B cell (primary cell): ENCODE measurements at regions of chr5 and their contacts with region 1.

Region 1: DNA sequence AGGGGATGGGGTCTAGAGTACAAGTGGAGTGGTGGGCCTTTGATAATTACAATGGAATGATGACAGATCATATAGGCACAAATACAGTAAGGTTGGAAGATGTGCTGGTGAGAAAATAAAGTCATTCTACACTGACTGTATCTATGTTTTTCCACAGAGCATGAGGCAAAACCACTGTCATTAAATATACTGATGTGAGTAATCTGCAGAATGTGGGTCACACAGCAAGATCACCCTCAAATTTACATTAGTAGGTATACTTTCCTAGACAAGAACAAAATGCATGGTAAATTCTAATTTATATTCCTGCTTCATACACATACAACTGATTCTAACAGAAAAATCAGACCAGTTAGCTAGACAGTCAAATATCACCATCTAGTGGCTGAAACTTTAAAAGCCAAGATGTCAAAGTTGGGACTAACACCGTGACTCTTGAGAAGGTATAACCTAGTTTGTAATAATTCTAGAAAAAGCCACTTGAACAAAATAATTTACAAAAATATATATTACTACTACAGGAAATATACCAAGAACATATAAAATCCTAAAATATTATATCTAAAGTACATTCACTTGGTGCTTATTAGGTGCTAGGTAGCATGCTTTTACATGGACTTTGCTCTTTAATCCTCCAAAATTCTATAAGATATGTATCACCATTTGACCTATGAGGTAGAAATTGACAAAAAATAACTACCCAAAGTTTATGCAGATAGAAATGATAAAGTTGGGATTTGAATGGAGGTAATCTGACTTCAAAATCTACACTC is 19.5 kb downstream of the TTC33 start:
- DNase-seq: peak; percentile 68
- ATAC-seq: no peak
- H3K4me3 ChIP-seq: no peak overlapping the region
- H3K4me3 Mint-ChIP-seq: no peak overlapping the region
- H3K27ac ChIP-seq: no peak overlapping the region
- H3K27ac Mint-ChIP-seq: no peak overlapping the region
- H3K4me1 ChIP-seq: no peaks in the 10 kb centered on the region
- H3K4me1 Mint-ChIP-seq: peaks cover 4% of the 10 kb centered on the region
- H3K27me3 ChIP-seq: no peaks in the 10 kb centered on the region
- H3K27me3 Mint-ChIP-seq: no peaks in the 10 kb centered on the region
- CTCF ChIP-seq: peak; percentile 93

Region 2: GRCh38 chr5:39578887-39579497 is 1157.3 kb before region 1 on chr5:
- CTCF ChIA-PET with region 1: interaction called, 4 read pairs
- POLR2A ChIA-PET with region 1: no interaction called
- intact Hi-C with region 1: loop called (anchors 1 kb)
- DNase-seq: peak; percentile 38
- ATAC-seq: no peak
- H3K4me3 ChIP-seq: no peak overlapping the region
- H3K4me3 Mint-ChIP-seq: no peak overlapping the region
- H3K27ac ChIP-seq: no peak overlapping the region
- H3K27ac Mint-ChIP-seq: no peak overlapping the region
- H3K4me1 ChIP-seq: peaks cover 7 to 11% of the 10 kb centered on the region in 2 donors
- H3K4me1 Mint-ChIP-seq: peaks cover 5% of the 10 kb centered on the region
- H3K27me3 ChIP-seq: no peaks in the 10 kb centered on the region
- H3K27me3 Mint-ChIP-seq: peaks cover 14% of the 10 kb centered on the region
- CTCF ChIP-seq: peak; percentile 95

Region 3: DNA sequence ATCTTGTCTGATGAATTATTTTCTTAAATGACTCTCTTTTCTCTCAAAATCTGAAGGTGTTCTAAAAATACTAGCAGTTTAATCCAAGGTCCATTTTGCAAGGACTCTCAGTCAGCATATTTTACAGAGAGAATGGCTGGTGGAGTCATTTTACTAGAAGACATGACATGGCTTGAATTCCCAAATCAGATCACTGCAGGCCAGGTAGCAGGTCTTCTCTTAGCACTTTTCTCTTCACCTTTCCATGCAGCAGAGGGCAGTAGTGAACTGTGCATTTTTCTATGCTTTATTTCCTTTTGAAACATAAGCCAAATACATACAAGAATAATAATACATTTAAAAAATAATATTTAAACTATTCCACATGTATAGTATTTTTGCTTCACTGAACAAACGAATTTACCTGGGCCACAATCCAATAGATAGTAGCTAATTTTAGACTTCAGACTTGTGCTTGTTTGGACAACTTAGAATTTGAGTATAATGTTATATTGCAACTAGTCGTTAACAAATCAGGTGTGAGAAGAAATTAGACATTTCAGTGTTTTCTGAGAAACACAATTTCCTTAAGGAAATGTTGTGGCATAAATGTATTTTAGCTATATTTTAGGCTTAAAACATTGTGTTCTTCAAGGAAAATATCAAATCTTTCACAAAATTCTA is 1022.1 kb before region 1 on chr5:
- CTCF ChIA-PET with region 1: interaction called, 54 read pairs
- POLR2A ChIA-PET with region 1: no interaction called
- intact Hi-C with region 1: loop called (anchors 1 kb)
- DNase-seq: peak; percentile 55
- ATAC-seq: no peak
- H3K4me3 ChIP-seq: no peak overlapping the region
- H3K4me3 Mint-ChIP-seq: no peak overlapping the region
- H3K27ac ChIP-seq: no peak overlapping the region
- H3K27ac Mint-ChIP-seq: no peak overlapping the region
- H3K4me1 ChIP-seq: no peaks in the 10 kb centered on the region
- H3K4me1 Mint-ChIP-seq: no peaks in the 10 kb centered on the region
- H3K27me3 ChIP-seq: peaks cover 0 to 3% (median 0%) of the 10 kb centered on the region in 4 experiments
- H3K27me3 Mint-ChIP-seq: no peaks in the 10 kb centered on the region
- CTCF ChIP-seq: peak; percentile 73

Region 4: DNA sequence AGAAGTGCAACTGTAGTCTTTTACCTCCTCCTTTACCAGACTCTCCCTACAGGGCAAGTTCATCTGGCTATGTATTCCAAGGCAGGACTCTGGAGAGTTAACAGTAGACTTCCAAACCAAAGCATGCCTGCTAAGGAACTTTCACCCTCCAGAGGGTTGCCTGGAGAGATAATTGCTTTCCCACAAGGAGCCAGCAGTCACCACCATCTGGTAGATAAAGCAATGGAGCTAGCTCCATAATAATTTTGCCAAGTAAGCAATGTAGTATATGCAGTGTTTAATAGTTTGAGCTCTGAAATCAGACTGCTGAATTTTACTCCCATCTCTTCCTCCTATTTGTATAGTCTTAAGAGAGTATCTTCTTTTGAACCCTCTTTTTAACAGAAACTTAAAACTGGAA is 623.4 kb before region 1 on chr5:
- CTCF ChIA-PET with region 1: no interaction called
- POLR2A ChIA-PET with region 1: no interaction called
- intact Hi-C with region 1: no loop called
- DNase-seq: no peak
- ATAC-seq: no peak
- H3K4me3 ChIP-seq: no peak overlapping the region
- H3K4me3 Mint-ChIP-seq: no peak overlapping the region
- H3K27ac ChIP-seq: no peak overlapping the region
- H3K27ac Mint-ChIP-seq: no peak overlapping the region
- H3K4me1 ChIP-seq: no peaks in the 10 kb centered on the region
- H3K4me1 Mint-ChIP-seq: no peaks in the 10 kb centered on the region
- H3K27me3 ChIP-seq: no peaks in the 10 kb centered on the region
- H3K27me3 Mint-ChIP-seq: no peaks in the 10 kb centered on the region
- CTCF ChIP-seq: no peak

Region 5: DNA sequence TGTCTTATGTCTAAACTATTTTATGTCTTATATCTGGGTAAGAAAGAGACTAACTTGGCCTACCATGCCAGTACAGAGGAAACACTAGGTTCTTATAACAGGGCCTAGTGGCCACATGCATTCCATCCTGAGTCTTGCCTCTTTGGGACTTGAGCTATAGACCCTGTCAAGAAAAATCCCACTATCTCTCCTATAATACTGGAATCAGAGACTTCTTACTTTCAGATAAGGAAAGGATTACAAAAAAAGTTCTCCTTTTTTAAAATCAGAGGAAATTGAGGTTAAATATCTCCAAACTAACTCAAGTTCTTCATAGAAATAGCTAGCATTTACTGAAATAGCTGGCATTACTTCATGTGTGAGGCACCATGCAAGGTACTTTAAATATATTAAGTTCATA is 22.3 kb before region 1 on chr5:
- CTCF ChIA-PET with region 1: no interaction called
- POLR2A ChIA-PET with region 1: no interaction called
- intact Hi-C with region 1: no loop called
- DNase-seq: no peak
- ATAC-seq: no peak
- H3K4me3 ChIP-seq: no peak overlapping the region
- H3K4me3 Mint-ChIP-seq: no peak overlapping the region
- H3K27ac ChIP-seq: no peak overlapping the region
- H3K27ac Mint-ChIP-seq: no peak overlapping the region
- H3K4me1 ChIP-seq: no peaks in the 10 kb centered on the region
- H3K4me1 Mint-ChIP-seq: peaks cover 3% of the 10 kb centered on the region
- H3K27me3 ChIP-seq: no peaks in the 10 kb centered on the region
- H3K27me3 Mint-ChIP-seq: no peaks in the 10 kb centered on the region
- CTCF ChIP-seq: no peak